ENCODE measurements at regions of chr15 and their contacts with region 1.

Region 1: GRCh38 chr15:96330450-96331145 is at the start of gene NR2F2:
- DNase-seq: peak; percentile 93 to 94
- ATAC-seq: peak; percentile 82 to 93 (median 88)
- H3K4me3 ChIP-seq: peak within 1 kb of the TSS; percentile 64 to 87 (median 78)
- H3K27ac ChIP-seq: peak within 1 kb of the TSS; percentile 77 to 96 (median 90)
- H3K4me1 ChIP-seq: peaks cover 0 to 28% (median 15%) of the 10 kb centered on the region in 9 donors
- H3K27me3 ChIP-seq: peaks cover 0 to 95% (median 36%) of the 10 kb centered on the region in 7 donors
- CTCF ChIP-seq: no peak
- total RNA-seq, gene NR2F2: 8.2 to 31.7 (median 14.3) TPM

Region 2: GRCh38 chr15:94670438-94671034 is 1660.1 kb before region 1 on chr15:
- intact Hi-C with region 1: loop called in 2 of 10 experiments (anchors 10 kb)
- DNase-seq: peak in 1 of 2 donors; percentile 13
- ATAC-seq: peak in 5 of 8 donors; percentile 41 to 63 (median 54)
- H3K4me3 ChIP-seq: no peak overlapping the region
- H3K27ac ChIP-seq: peak overlapping the region in 4 of 10 donors; percentile 5 to 70 (median 29)
- H3K4me1 ChIP-seq: peaks cover 0 to 20% (median 8%) of the 10 kb centered on the region in 9 donors
- H3K27me3 ChIP-seq: peaks cover 0 to 5% (median 0%) of the 10 kb centered on the region in 7 donors
- CTCF ChIP-seq: peak; percentile 54 to 86 (median 76)

Region 3: GRCh38 chr15:95259513-95259912 is 1071.1 kb before region 1 on chr15:
- intact Hi-C with region 1: loop called in 1 of 10 experiments (anchors 5 kb)
- DNase-seq: peak; percentile 28 to 77
- ATAC-seq: peak in 7 of 8 donors; percentile 72 to 93 (median 83)
- H3K4me3 ChIP-seq: no peak overlapping the region
- H3K27ac ChIP-seq: peak overlapping the region in 7 of 10 donors; percentile 16 to 58 (median 41)
- H3K4me1 ChIP-seq: peaks cover 0 to 25% (median 11%) of the 10 kb centered on the region in 9 donors
- H3K27me3 ChIP-seq: peaks cover 0 to 16% (median 4%) of the 10 kb centered on the region in 7 donors
- CTCF ChIP-seq: peak; percentile 67 to 90 (median 82)

Region 4: GRCh38 chr15:95470997-95471689 is 859.5 kb before region 1 on chr15:
- intact Hi-C with region 1: loop called in 1 of 10 experiments (anchors 10 kb)
- DNase-seq: peak; percentile 20 to 23
- ATAC-seq: peak; percentile 34 to 74 (median 66)
- H3K4me3 ChIP-seq: no peak overlapping the region
- H3K27ac ChIP-seq: peak overlapping the region in 8 of 10 donors; percentile 23 to 66 (median 53)
- H3K4me1 ChIP-seq: peaks cover 0 to 28% (median 22%) of the 10 kb centered on the region in 9 donors
- H3K27me3 ChIP-seq: no peaks in the 10 kb centered on the region
- CTCF ChIP-seq: no peak

Region 5: GRCh38 chr15:95620934-95621579 is 709.5 kb before region 1 on chr15:
- intact Hi-C with region 1: loop called in 1 of 10 experiments (anchors 10 kb)
- DNase-seq: no peak
- ATAC-seq: peak in 2 of 8 donors; percentile 31 to 35
- H3K4me3 ChIP-seq: no peak overlapping the region
- H3K27ac ChIP-seq: peak overlapping the region in 3 of 10 donors; percentile 11 to 54 (median 46)
- H3K4me1 ChIP-seq: peaks cover 0 to 11% (median 0%) of the 10 kb centered on the region in 9 donors
- H3K27me3 ChIP-seq: no peaks in the 10 kb centered on the region
- CTCF ChIP-seq: no peak

Region 6: GRCh38 chr15:96053031-96053780 is 277.4 kb before region 1 on chr15:
- intact Hi-C with region 1: loop called in 1 of 10 experiments (anchors 10 kb)
- DNase-seq: peak; percentile 42 to 72
- ATAC-seq: peak; percentile 83 to 98 (median 94)
- H3K4me3 ChIP-seq: peak overlapping the region in 9 of 10 donors; percentile 20 to 40 (median 37)
- H3K27ac ChIP-seq: peak overlapping the region; percentile 48 to 84 (median 72)
- H3K4me1 ChIP-seq: peaks cover 4 to 30% (median 20%) of the 10 kb centered on the region in 9 donors
- H3K27me3 ChIP-seq: peaks cover 0 to 44% (median 0%) of the 10 kb centered on the region in 7 donors
- CTCF ChIP-seq: no peak

Region 7: DNA sequence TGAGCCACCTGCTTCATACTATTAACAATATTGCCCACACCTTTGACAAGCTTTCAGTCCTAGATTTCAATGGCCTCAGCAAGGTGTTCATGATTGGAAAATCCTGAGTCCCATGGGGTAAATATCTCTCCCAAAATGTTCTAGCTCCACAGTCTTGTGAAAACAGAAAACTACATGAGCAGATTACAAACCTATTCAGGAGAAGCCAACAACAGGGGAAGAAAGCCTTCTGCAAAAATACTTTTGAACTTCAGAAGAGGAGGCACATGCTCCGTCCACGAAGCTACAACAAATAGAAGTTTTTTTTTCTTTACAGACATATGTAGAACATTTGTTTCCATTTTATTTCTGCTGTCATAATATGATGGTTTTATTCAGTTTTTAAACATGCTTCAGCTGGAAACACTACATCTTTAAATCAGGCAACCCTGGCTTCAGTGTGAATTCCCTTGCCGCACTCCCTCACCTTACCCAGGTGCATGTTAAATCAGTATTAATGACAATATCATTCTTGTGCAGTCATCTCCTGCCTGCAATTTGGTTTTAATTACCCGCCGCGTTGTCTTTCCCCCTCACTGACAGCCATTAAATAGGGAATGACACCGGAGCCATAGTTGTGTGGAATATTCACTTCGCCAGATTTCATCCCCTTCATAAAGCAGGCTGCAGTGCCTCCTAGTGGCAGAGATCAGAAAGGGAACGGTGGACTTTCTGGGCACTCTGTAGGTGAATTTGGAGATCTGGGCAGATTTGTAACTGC is 904.4 kb after region 1 on chr15:
- intact Hi-C with region 1: loop called in 1 of 10 experiments (anchors 10 kb)
- DNase-seq: peak; percentile 15 to 44
- ATAC-seq: peak in 3 of 8 donors; percentile 63 to 65 (median 63)
- H3K4me3 ChIP-seq: peak overlapping the region in 1 of 10 donors; percentile 6
- H3K27ac ChIP-seq: no peak overlapping the region
- H3K4me1 ChIP-seq: peaks cover 0 to 4% (median 0%) of the 10 kb centered on the region in 9 donors
- H3K27me3 ChIP-seq: peaks cover 0 to 9% (median 0%) of the 10 kb centered on the region in 7 donors
- CTCF ChIP-seq: peak; percentile 65 to 89 (median 86)

Measured in heart right ventricle (tissue), 16 donors.